ENCODE measurements at regions of chr7 and their contacts with region 1.

Region 1: GRCh38 chr7:716222-716621 is 10.3 kb upstream of the DNAAF5 start:
- DNase-seq: peak; percentile 19

Region 2: GRCh38 chr7:85074-85882 is 630.9 kb before region 1 on chr7:
- intact Hi-C with region 1: no loop called
- DNase-seq: peak; percentile 67

Region 3: DNA sequence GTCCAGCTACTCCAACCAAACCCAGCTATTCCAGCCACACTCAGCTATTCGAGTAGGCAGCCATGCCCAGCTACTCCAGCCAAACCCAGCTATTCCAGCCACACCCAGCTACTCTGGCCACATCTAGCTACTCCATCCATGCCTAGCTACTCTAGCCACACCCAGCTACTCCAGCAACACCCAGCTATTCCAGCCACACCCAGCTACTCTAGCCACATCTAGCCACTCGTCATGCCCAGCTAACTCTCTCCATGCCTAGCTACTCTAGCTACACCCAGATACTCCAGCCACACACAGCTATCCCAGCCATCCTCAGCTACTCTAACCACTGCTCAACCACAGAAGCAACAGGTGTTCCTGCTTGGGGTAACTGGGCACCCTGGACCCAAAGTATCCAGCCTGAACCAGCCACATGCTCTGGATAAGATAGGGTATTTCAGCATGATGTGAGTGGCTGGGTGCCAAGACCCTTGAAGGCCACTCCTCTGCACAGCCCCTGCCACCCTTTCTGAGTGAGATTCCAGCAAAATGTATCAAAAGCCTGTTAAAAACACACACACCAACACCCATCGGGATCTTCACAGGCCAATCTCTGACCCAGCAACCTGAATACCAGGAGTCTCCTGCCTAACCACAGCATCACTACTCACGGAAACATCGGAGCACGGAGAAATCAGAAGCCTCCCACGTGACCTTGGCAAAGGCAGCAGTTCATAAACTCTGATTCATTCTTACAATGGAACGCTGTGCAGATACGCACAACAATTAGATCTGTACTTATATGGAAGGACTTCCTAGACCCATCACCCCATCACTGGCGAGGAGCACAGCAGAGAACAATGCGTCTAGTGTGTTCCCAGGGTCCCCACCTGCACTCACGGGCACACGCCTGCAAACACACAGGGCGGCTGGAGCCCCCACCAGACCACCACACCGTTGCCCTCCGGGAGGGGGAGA is 41.5 kb before region 1 on chr7:
- intact Hi-C with region 1: no loop called
- DNase-seq: peak; percentile 58

Region 4: DNA sequence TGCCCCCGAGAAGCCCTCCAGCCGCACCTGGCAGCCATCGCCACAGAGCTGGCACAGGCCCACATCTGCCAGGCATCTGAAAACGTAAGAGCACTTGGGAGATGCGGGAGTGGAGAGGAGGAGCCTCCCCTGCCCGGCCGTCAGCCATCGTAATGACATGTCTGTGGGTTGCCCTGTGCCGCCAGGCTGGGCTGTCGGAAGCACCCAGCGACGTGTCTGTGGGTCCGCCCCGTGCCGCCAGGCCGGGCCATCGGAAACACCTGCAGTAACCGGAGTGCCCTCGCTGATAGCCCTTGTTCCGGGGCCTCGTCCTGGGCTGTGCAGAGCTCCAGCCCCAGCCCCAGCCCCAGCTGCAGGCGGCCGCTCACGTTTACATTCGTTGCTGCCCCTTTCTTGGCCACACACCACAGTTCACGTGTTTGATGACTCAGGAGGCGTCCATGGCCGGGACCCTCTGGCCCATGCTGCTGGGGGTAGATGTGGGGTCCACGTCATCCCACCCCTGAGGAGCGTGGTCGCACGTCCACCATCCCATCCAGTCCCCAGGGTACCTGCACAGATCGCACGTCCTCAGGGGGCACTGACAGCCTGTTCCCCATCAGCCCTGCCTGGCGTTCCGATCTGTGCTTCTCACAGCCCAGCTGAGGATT is 40.8 kb after region 1 on chr7:
- intact Hi-C with region 1: loop called in 1 of 2 experiments (anchors 5 kb)
- DNase-seq: peak; percentile 63

Region 5: DNA sequence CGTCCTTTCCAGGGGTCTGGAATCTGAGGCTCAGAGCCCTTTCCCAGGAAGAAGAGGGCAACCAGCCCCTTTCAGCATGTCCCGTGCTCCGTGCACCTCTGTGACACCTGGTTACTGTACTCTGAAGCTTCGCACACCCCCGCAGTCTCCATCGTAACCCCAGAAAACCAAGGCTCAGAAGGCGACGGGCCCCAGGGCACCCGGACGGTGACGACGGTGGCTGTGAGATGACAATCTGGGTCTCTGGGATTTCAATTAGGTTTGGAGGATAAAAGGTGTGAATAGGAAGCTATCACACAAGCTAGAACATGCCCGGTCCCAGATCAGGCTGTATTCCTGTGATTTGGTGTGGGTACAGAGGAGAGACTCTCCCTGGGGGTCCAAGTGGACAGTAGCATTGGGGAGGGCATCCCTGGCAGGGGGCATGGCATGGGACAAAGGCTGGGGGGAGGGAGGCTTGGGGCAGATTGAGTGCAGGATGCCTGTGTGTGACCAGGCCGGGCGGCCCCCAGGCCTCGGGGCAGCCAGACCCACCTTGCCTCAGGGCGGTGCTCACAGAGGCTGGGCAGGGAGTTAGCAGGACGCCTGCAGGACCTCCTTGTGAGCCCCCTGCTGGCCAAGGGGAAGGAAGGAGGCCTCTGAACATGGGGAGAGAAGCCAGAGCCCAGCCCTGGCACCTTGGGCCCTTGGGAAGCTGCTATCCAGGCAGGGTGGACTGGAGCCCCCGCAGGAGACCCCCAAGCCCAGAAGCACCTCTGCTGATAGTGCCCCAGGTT is 877.1 kb after region 1 on chr7:
- intact Hi-C with region 1: no loop called
- DNase-seq: no peak